ENCODE measurements at regions of chr6 and their contacts with region 1.

Region 1: DNA sequence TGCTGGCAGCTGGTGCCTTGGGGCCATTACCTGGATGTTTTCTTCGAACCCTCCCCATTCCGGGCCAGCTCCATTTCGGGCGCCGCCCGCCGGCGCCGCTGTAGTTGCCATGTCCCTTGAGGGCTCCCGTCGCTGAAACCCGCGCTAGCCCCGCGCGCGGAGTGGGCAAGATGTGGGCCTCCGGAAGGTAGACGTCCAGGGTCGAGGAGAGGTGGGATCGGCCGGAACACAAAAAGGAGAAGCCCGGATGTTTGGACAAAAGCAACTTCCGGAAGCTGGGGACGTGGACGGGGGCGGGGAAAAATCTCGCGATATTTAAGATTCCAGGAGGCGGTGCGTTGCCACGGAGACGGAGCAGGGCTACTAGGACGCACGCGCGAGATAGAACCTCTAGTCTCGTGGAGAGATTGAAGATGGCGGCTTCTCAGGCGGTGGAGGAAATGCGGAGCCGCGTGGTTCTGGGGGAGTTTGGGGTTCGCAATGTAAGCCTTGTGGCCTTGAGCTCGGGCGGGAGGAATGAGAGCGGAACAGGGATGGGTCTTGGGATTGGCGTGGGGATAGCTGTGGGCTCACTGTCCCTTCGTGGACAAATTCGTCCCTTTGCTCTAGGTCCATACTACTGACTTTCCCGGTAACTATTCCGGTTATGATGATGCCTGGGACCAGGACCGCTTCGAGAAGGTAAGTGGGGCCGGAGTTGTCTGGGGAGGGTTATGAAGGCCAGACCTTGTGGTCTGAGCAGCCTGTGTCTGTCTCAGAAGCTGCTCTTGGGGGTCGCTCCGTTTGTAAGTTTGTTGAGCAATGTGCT is at the starts of genes POLR1C and YIPF3:
- DNase-seq: peak; percentile 98 to 100 (median 99)
- ATAC-seq: peak; percentile 90
- H3K4me3 ChIP-seq: peak within 1 kb of the TSS; percentile 80
- H3K27ac ChIP-seq: peak within 1 kb of the TSS; percentile 91
- H3K4me1 ChIP-seq: peaks cover 10 to 19% of the 10 kb centered on the region in 2 experiments; a peak in 3 of 5 replicates
- H3K27me3 ChIP-seq: no peaks in the 10 kb centered on the region
- CTCF ChIP-seq: peak in 2 of 3 experiments; percentile 9 to 26; a peak in 2 of 6 replicates
- EP300 ChIP-seq: peak; percentile 38; the same call in 1 of the 2 replicates
- POLR2A ChIP-seq: peak; percentile 99
- RAD21 ChIP-seq: no peak
- polyA plus RNA-seq, gene POLR1C: 405 to 429 TPM
- polyA plus RNA-seq, gene YIPF3: 40.4 to 48.6 TPM

Region 2: DNA sequence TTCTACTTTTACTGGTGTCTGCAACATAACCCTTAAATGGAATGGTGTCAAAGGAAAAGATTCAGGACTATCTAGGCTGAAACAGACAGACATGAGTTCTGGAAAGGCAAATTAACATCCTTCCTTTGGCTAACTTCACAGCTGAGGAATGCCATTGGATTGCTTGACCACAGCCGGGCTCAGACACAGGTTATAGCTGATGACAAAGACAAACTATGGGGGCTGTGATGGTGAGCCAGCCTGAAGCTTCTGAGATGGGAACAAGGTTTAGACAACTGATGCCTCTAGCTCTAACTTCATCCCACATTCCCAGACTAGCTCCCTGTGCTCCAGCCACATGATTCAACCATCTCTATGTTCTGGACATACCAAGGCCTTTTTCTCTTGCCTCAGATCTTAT is 15.3 kb after region 1 on chr6:
- CTCF ChIA-PET with region 1: no interaction called
- POLR2A ChIA-PET with region 1: interaction called, 89 read pairs
- in situ Hi-C with region 1: no loop called
- intact Hi-C with region 1: no loop called
- DNase-seq: no peak
- ATAC-seq: no peak
- H3K4me3 ChIP-seq: no peak overlapping the region
- H3K27ac ChIP-seq: no peak overlapping the region
- H3K4me1 ChIP-seq: no peaks in the 10 kb centered on the region
- H3K27me3 ChIP-seq: no peaks in the 10 kb centered on the region
- CTCF ChIP-seq: no peak
- EP300 ChIP-seq: no peak
- POLR2A ChIP-seq: no peak
- RAD21 ChIP-seq: no peak

Region 3: DNA sequence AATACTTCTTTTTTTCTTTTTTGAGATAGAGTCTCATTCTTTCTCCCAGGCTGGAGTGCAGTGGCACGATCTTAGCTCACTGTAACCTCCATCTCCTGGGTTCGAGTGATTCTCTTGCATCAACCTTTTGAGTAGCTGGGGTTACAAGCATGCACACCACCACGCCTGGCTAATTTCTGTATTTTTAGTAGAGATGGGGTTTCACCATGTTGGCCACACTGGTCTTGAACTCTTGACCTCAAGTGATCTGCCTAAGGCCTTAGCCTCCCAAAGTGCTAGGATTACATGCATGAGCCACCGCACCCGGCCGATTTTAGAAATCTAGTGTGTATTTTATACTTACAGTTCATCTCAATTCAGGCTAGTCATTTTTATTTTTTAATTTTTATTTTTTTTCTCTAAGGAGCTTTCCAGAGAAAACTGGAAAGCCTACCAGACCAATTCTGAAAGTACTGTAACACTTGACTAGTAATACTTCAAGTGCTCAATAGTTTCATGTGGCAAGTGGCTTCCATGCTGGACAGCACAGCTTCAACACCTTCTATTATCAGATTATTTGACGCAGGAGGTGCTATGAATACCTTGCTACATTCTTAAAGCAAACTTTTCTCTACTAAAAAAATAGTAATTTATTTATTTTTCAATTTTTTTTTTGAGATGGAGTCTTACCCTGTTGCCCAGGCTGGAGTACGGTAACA is 25.0 kb after region 1 on chr6:
- CTCF ChIA-PET with region 1: no interaction called
- POLR2A ChIA-PET with region 1: interaction called, 21 read pairs
- in situ Hi-C with region 1: no loop called
- intact Hi-C with region 1: no loop called
- DNase-seq: no peak
- ATAC-seq: no peak
- H3K4me3 ChIP-seq: no peak overlapping the region
- H3K27ac ChIP-seq: no peak overlapping the region
- H3K4me1 ChIP-seq: no peaks in the 10 kb centered on the region
- H3K27me3 ChIP-seq: no peaks in the 10 kb centered on the region
- CTCF ChIP-seq: no peak
- EP300 ChIP-seq: no peak
- POLR2A ChIP-seq: no peak
- RAD21 ChIP-seq: no peak